Activated CD4-positive, alpha-beta T cell treated with anti-CD3 and anti-CD28 coated beads, Interleukin-2, amount 10 ng/mL, durations not matched to agents 24 days and 14 days (primary cell): ENCODE measurements at regions of chr13 and their contacts with region 1.

Region 1: DNA sequence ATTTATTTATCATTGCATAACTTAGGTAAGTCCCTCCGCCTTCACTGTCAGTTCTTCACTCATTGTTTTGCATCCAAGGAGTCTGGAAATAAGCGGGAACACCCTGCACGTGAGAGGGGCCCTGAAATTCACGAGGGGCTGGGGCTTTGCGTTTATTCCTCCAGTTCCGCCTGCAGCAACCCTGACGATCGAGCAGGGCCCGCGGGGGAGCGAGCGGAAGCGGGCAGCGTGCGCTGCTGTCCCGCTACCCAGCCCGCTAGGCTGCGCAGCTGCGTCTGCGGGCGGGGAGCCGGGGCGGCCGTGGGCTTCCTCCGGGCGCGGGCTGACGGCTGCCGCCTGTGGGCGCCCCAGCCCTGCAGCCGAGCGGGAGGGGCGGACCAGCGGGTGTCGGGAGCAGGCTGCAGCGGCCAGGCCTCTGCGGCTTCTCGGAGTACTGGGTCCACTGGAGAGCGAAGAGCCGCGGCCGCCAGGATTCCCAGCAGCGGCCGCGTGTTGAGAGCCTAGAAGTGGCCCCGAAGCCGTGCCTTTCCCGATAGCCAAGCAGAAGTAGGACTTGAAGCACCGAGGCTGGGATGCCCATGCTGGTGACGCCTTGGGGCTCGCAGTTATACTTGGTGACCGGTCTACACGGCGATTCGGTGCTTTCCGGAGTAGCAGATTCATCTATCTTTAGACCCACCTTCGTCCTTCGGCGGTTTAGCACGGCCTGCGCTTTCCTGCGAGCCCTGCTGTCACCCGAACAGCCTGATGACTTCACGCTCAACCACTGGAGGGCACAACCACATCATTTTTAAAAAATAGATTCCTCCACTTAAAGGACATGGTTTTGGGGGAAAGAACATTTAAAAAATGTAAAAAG is 32.9 kb upstream of the SACS start:
- DNase-seq: peak; percentile 85
- H3K4me3 Mint-ChIP-seq: peak overlapping the region; percentile 72
- H3K27ac Mint-ChIP-seq: peak overlapping the region; percentile 35
- H3K4me1 Mint-ChIP-seq: peaks cover 5% of the 10 kb centered on the region
- H3K27me3 Mint-ChIP-seq: peaks cover 34% of the 10 kb centered on the region

Region 2: GRCh38 chr13:23871616-23872220 is 405.3 kb after region 1 on chr13:
- intact Hi-C with region 1: loop called (anchors 1 kb)
- DNase-seq: peak; percentile 38
- H3K4me3 Mint-ChIP-seq: no peak overlapping the region
- H3K27ac Mint-ChIP-seq: no peak overlapping the region
- H3K4me1 Mint-ChIP-seq: no peaks in the 10 kb centered on the region
- H3K27me3 Mint-ChIP-seq: no peaks in the 10 kb centered on the region

Region 3: DNA sequence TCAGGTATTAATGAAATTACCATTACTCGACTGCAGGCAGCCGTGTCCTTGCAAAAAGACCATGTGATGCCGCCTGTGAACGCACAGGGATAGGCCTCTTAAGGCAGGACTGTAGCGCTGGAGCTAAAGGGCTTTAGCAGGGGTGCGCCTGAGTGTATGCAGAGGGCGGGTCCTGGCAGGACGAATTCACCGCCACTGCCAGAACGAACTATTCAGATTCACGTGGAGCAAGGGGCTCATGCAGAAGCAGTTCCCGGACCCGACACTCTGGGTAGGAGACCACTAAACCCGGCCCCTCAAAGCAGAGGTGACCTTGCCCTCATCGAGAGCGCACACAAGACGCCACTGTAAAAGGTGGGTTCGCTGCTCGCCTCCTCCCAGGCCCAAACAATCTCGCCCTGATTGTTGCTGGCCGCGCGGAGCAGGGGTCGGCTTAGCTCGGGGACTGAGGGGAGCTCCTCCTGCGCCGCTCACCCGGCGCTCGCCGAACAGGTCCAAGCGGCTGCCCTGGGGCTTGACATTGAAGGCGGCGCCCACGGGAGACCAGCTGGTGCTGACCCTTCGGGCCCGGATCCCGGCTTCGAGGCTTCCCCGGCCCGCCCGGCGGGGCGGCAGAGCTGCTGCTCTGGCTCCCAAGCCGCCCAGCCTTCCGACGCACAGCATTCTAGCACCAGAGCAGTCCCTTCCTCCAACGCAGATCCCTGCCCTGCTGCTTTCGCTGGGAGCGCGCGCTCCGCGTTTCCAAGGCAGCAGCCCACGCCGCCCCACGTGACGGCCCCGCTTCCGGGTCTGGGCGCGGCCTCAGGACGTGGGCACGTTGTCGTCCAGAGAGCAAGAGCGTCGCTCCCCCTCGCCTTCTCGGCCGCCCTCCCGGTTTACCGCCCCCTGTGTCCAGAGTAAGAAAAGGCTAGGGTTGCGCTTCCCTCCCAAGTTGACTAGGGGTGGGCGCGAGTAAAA is 422.6 kb after region 1 on chr13 and contains the start of gene MIPEP:
- intact Hi-C with region 1: loop called (anchors 5 kb)
- DNase-seq: peak; percentile 97
- H3K4me3 Mint-ChIP-seq: peak within 1 kb of the TSS; percentile 88
- H3K27ac Mint-ChIP-seq: peak within 1 kb of the TSS; percentile 82
- H3K4me1 Mint-ChIP-seq: peaks cover 22% of the 10 kb centered on the region
- H3K27me3 Mint-ChIP-seq: no peaks in the 10 kb centered on the region
- total RNA-seq, gene MIPEP: 10.4 and 10.9 TPM in 2 replicates

Region 4: GRCh38 chr13:23902975-23903905 is 436.9 kb after region 1 on chr13:
- intact Hi-C with region 1: loop called (anchors 5 kb)
- DNase-seq: no peak
- H3K4me3 Mint-ChIP-seq: no peak overlapping the region
- H3K27ac Mint-ChIP-seq: no peak overlapping the region
- H3K4me1 Mint-ChIP-seq: peaks cover 6% of the 10 kb centered on the region
- H3K27me3 Mint-ChIP-seq: peaks cover 54% of the 10 kb centered on the region